HAP-1 (cell line): ENCODE measurements at regions of chr7 and their contacts with region 1.

Region 1: GRCh38 chr7:151304856-151305255 is 36.8 kb upstream of the NUB1 start:
- DNase-seq: no peak
- H3K4me3 ChIP-seq: no peak overlapping the region
- H3K4me1 ChIP-seq: peaks cover 3% of the 10 kb centered on the region
- H3K27me3 ChIP-seq: peaks cover 7% of the 10 kb centered on the region; the same call in 1 of the 2 replicates

Region 2: GRCh38 chr7:151123822-151124464 is 180.9 kb before region 1 on chr7:
- in situ Hi-C with region 1: loop called (anchors 10 kb)
- DNase-seq: peak; percentile 69 to 90
- H3K4me3 ChIP-seq: no peak overlapping the region
- H3K4me1 ChIP-seq: no peaks in the 10 kb centered on the region
- H3K27me3 ChIP-seq: no peaks in the 10 kb centered on the region